ENCODE measurements at regions of chr7 and their contacts with region 1.

Region 1: DNA sequence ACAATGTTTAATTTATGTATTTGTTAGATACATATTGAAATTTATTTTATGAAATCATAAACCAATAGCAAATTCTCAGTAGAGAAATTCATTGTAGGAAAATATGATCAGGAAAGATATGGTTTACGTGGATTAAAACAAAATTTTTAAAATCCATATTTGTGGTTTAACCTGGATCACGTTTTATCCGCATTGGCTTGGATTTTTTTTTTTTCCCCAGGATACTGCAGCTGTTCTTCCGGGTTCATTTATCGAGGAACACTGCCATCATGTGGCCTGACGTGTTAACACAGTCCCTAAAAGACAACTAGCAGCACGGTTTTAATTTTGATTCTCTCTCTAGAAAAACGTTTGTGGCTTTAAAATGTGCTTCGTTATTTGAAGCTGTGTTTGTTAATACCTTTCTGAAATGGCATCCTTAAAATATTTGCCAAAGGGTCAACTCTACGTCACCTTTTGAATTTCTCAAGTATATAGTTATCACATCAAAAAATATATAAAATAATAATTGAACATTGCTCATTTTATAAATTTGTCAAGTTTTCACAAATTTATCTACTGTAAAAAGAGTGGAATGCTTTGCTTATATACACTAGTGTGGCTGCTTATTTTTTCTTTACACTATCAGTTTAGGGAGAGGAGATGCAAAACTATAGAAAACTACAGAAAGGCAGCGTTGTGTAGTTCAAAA is 8.7 kb upstream of the ASB4 start:
- DNase-seq: peak; percentile 69
- ATAC-seq: peak; percentile 87
- H3K4me3 ChIP-seq: no peak overlapping the region
- H3K27ac ChIP-seq: no peak overlapping the region
- H3K4me1 ChIP-seq: no peaks in the 10 kb centered on the region
- H3K27me3 ChIP-seq: peaks cover 16% of the 10 kb centered on the region
- CTCF ChIP-seq: peak; percentile 80
- POLR2A ChIP-seq: no peak
- RAD21 ChIP-seq: peak; percentile 82

Region 2: DNA sequence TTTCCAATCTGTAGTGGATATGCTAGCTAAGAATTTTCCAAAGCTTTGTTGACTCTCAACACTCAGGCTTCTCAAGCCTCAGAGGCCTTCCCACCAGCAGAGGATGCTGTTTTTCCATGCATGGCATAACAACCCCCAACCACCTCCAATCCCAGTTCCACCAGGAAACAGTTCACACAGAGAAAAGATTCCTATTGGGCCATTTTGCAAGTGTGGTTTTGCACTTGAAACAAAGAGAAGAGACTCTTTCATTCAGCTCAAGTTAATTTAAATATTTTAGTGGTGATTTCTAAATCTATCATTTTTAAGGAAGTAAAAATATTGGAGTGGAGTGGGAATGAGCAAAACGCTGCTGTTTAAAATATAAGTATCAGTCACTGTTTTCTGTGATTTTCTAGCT is 1188.0 kb before region 1 on chr7:
- CTCF ChIA-PET with region 1: interaction called, 6 read pairs
- POLR2A ChIA-PET with region 1: no interaction called
- dilution Hi-C with region 1: no loop called
- in situ Hi-C with region 1: loop called (anchors 25 kb)
- intact Hi-C with region 1: no loop called
- DNase-seq: peak; percentile 91
- ATAC-seq: peak; percentile 96
- H3K4me3 ChIP-seq: no peak overlapping the region
- H3K27ac ChIP-seq: no peak overlapping the region
- H3K4me1 ChIP-seq: no peaks in the 10 kb centered on the region
- H3K27me3 ChIP-seq: no peaks in the 10 kb centered on the region
- CTCF ChIP-seq: peak; percentile 100
- POLR2A ChIP-seq: peak; percentile 63
- RAD21 ChIP-seq: peak; percentile 100

Region 3: GRCh38 chr7:94632338-94633013 is 844.6 kb before region 1 on chr7:
- CTCF ChIA-PET with region 1: no interaction called
- POLR2A ChIA-PET with region 1: no interaction called
- dilution Hi-C with region 1: no loop called
- in situ Hi-C with region 1: no loop called
- intact Hi-C with region 1: loop called (anchors 1 kb)
- DNase-seq: peak; percentile 80
- ATAC-seq: peak; percentile 78
- H3K4me3 ChIP-seq: no peak overlapping the region
- H3K27ac ChIP-seq: no peak overlapping the region
- H3K4me1 ChIP-seq: peaks cover 2% of the 10 kb centered on the region; the same call in 1 of the 2 replicates
- H3K27me3 ChIP-seq: no peaks in the 10 kb centered on the region
- CTCF ChIP-seq: no peak
- POLR2A ChIP-seq: no peak
- RAD21 ChIP-seq: no peak

Region 4: DNA sequence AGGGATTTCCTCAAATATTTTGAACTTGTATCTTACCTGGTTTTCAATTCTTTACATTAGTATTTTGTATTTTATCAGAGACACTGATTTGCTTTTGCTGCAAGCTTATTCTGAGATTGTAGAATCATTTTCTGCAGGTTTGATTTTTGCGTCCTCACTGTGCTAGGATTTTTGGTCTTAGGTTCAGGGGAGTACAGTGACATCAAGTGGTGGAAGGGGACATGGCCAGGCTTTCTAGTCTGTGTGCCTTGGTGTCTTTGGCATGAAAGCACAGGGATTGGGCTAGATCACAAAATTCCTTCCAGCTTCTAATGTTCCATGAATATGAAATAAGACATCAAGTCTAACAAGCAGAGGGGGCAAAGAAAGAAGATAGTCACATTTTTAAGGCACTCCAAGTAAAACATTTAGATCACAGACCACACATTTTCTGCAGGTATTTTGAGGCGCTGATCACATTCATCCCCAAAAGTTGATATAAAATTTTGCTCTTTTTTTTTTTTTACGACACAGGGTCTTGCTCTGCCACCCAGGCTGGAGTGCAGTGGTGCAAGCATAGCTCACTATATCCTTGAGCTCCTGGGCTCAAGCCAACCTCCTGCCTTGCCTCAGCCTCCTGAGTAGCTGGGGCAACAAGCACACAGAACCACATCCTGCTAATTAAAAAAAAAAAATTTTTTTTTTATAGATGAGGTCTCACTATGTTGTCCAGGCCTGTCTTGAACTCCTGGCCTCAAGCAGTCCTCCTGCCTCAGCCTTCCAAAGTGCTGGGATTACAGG is 277.1 kb before region 1 on chr7:
- CTCF ChIA-PET with region 1: no interaction called
- POLR2A ChIA-PET with region 1: no interaction called
- dilution Hi-C with region 1: no loop called
- in situ Hi-C with region 1: loop called (anchors 10 kb)
- intact Hi-C with region 1: no loop called
- DNase-seq: peak; percentile 33
- ATAC-seq: peak; percentile 72
- H3K4me3 ChIP-seq: no peak overlapping the region
- H3K27ac ChIP-seq: no peak overlapping the region
- H3K4me1 ChIP-seq: no peaks in the 10 kb centered on the region
- H3K27me3 ChIP-seq: no peaks in the 10 kb centered on the region
- CTCF ChIP-seq: peak; percentile 52
- POLR2A ChIP-seq: no peak
- RAD21 ChIP-seq: peak; percentile 61

Region 5: DNA sequence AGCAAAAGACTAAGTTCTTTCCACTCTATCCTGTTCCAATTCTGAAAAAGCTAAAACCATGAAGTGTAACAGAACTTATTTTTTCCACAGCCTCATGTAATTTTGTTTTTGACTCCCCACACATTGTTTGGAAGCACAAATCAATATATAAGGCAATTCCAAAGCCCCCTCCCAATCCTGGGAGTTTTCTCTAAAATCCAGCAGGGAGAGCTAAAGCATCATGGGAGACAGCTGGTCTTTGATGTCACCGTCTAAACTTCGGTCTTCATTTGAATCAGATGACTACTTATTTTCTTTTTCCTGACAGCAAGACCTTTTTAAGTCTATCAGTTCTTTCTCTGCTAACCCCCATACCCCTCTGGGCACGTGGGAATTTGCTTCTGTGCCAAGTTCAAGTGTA is 119.4 kb before region 1 on chr7:
- CTCF ChIA-PET with region 1: no interaction called
- POLR2A ChIA-PET with region 1: no interaction called
- dilution Hi-C with region 1: no loop called
- in situ Hi-C with region 1: no loop called
- intact Hi-C with region 1: loop called (anchors 1 kb)
- DNase-seq: no peak
- ATAC-seq: no peak
- H3K4me3 ChIP-seq: no peak overlapping the region
- H3K27ac ChIP-seq: no peak overlapping the region
- H3K4me1 ChIP-seq: no peaks in the 10 kb centered on the region
- H3K27me3 ChIP-seq: no peaks in the 10 kb centered on the region
- CTCF ChIP-seq: 0 out of 2 replicates have a peak, but pooled peaks have one; percentile 27
- POLR2A ChIP-seq: no peak
- RAD21 ChIP-seq: peak; percentile 15; the same call in 1 of the 2 replicates

Measured in IMR-90 (cell line).